ENCODE measurements at regions of chr2 and their contacts with region 1.

Region 1: GRCh38 chr2:8803658-8804379 is 33.6 kb downstream of the KIDINS220 start:
- DNase-seq: peak; percentile 93
- H3K4me3 Mint-ChIP-seq: no peak overlapping the region
- H3K27ac Mint-ChIP-seq: peak overlapping the region; percentile 83
- H3K4me1 Mint-ChIP-seq: peaks cover 14% of the 10 kb centered on the region
- H3K27me3 Mint-ChIP-seq: no peaks in the 10 kb centered on the region
- CTCF ChIP-seq: no peak

Region 2: GRCh38 chr2:8598295-8599165 is 205.3 kb before region 1 on chr2:
- CTCF ChIA-PET with region 1: no interaction called
- POLR2A ChIA-PET with region 1: no interaction called
- intact Hi-C with region 1: no loop called
- DNase-seq: peak; percentile 97
- H3K4me3 Mint-ChIP-seq: no peak overlapping the region
- H3K27ac Mint-ChIP-seq: peak overlapping the region; percentile 7
- H3K4me1 Mint-ChIP-seq: no peaks in the 10 kb centered on the region
- H3K27me3 Mint-ChIP-seq: no peaks in the 10 kb centered on the region
- CTCF ChIP-seq: no peak

Region 3: DNA sequence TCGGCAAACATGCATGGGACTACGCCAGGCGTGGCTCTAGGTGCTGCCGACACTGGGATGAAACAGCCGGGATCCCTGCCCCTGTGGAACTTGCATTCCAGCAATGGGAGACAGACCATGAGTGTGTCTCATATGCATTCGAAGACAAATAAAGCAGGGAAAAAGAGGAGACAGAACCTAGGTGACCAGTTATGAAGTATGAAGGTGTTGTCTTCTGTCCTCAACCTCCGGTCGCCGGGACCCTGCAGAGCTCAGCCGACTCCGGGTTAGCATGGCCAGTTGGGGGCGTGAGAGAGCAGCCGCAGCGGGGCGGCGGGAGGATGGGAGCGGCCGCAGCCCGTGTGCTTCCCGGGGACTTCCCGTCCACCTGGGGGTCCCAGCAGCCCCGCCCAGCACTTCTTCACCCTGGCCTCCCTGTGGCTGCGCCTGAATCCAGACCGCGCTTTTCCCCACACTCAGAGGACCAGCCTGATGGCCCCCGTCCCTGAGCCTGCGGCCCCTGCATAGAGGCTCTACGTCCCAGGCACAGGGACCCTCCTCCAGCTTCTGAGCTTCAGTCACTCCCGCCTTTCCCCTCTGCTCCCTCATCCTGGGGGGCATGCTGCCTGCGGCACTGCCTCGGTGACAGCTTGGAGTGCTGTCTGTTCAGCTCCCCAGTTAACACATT is 110.5 kb before region 1 on chr2:
- CTCF ChIA-PET with region 1: no interaction called
- POLR2A ChIA-PET with region 1: no interaction called
- intact Hi-C with region 1: loop called (anchors 5 kb)
- DNase-seq: peak; percentile 33
- H3K4me3 Mint-ChIP-seq: no peak overlapping the region
- H3K27ac Mint-ChIP-seq: no peak overlapping the region
- H3K4me1 Mint-ChIP-seq: no peaks in the 10 kb centered on the region
- H3K27me3 Mint-ChIP-seq: peaks cover 19% of the 10 kb centered on the region
- CTCF ChIP-seq: peak; percentile 57

Region 4: DNA sequence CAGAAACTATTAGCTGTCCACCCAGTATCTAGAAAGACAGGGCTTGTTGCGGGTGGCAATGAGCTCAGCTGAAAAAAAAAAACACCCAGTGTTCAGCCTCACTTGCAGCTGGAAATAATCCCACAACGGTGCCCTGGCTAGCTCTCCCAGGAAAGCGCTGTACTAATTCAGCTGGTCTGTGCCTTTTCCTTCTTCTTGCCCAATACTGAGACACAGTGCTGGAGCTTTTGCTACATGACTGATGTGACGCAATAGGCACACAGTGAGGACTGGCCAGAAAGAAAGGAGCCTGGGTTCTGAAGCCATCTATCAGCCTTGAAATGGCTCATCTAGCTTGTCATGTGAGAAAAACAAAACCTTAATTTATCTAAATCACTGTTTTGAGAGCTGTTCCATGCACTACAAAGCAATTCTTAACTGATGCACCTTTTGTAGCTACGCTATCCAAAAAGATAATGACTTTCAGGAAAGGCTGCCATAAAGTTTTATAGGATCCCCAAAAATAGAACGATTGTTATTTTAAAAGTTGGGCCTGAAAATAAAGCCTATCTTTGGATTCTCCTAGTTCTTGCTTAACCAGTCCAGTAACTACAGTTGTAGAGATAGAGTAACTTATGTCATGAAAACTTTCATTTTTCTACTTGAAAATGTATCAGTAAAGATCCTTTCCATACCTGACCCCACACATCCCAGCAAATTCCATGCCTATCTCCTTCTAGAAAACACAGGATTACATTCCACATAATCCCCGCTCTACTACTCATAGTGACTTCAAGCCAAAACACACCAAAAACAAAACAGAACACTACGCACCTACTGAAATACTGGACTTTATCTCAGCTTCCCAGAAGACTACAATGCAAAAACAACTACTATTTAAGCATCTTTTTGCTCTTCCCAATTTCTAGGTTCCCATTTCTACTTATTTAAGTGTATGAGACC is 17.7 kb after region 1 on chr2:
- CTCF ChIA-PET with region 1: interaction called, 4 read pairs
- POLR2A ChIA-PET with region 1: interaction called, 26 read pairs
- intact Hi-C with region 1: no loop called
- DNase-seq: peak; percentile 90
- H3K4me3 Mint-ChIP-seq: no peak overlapping the region
- H3K27ac Mint-ChIP-seq: peak overlapping the region; percentile 70
- H3K4me1 Mint-ChIP-seq: peaks cover 19% of the 10 kb centered on the region
- H3K27me3 Mint-ChIP-seq: no peaks in the 10 kb centered on the region
- CTCF ChIP-seq: no peak

Region 5: DNA sequence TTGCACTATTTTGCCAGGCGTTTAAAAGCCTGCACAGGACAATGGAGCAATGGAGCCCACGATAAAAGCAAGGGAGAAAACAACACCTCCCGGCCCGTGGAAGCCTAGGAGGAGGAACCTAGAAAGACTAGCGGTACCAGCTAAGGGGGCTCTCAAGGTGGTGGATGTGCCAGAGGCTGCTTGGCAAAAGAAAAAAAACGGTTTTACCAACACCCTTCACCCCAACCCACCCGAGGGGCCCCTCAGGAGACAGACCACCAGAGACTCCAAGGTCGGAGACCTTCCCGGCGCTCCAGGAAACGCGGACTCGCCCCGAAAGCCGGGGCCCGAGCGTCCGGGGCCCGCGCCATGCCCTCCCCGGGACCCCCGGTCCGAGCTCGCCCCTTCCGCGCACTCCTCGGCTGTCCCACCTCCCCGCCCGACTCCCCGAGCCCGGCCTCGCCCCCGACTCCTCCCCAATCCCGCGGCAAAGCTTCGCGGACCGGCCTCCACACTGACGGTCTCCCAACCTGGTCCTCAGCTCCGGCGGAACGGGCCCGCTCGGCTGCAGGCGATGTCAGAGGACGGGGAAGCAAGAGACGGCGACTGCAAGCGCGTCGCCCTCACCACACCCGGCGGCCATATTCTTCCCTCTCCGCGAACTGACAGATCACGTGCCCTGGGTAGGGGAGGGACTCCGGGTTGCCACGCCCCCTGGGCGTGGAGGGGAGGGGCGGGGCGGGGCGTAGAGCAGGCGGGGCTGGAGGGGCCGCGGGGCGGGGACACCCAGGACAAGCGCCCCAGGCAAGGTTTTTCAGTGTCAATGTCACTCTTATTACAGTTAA is 33.4 kb after region 1 on chr2 and contains the start of gene KIDINS220:
- CTCF ChIA-PET with region 1: no interaction called
- POLR2A ChIA-PET with region 1: interaction called, 10 read pairs
- intact Hi-C with region 1: loop called (anchors 2 kb)
- DNase-seq: peak; percentile 86
- H3K4me3 Mint-ChIP-seq: peak within 1 kb of the TSS; percentile 91
- H3K27ac Mint-ChIP-seq: peak within 1 kb of the TSS; percentile 97
- H3K4me1 Mint-ChIP-seq: peaks cover 23% of the 10 kb centered on the region
- H3K27me3 Mint-ChIP-seq: no peaks in the 10 kb centered on the region
- CTCF ChIP-seq: no peak
- total RNA-seq, gene KIDINS220: 41.8 and 42.3 TPM in 2 replicates